Endothelial cell of umbilical vein (primary cell): ENCODE measurements at regions of chr10 and their contacts with region 1.

Region 1: DNA sequence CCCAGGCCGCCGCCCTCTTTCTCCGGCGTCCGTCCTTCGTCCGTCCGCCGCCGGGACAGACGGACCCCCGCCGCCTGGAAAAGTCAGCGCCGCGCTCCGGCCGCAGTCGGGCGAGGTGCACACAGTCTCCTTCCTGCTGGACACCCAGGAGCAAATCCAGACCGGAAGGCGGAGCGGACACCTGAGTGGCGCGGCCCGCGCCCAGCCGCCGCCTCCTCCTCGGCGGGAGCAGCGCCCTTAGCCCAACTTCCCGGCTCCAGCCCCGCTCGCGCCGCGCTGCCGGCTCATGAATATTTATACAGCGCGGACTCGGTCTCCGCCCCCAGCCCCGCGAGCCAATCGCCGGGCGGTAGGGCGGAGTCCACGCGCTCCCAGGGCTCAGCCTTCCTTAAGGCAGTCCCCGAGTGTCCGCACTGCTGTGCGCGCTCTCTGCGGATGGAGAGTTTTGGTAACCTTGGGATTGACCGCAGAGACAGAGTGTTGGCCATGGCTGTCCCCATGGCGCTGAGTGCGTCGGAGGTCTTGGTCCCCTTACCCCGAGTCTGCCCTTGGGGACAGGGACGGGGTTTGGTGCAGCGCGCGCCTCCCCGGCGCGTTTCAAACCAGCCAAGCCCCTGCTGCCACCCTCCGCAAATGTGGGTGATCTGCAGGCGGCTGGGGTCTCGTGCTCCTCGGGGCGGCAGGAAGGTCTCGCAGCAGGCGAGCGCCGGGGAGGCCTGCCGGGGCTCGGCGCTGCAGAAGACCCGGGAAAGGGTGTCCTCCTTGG is at the start of gene FZD8:
- DNase-seq: peak; percentile 95
- H3K4me3 ChIP-seq: peak within 1 kb of the TSS; percentile 58 to 74 (median 72)
- H3K27ac ChIP-seq: peak within 1 kb of the TSS; percentile 25
- H3K4me1 ChIP-seq: peaks cover 38% of the 10 kb centered on the region
- H3K27me3 ChIP-seq: peaks cover 2 to 25% of the 10 kb centered on the region in 2 experiments
- CTCF ChIP-seq: peak in 1 of 2 donors; percentile 35
- POLR2A ChIP-seq: peak; percentile 98
- total RNA-seq, gene FZD8: 9.1 and 11.1 TPM in 2 replicates

Region 2: DNA sequence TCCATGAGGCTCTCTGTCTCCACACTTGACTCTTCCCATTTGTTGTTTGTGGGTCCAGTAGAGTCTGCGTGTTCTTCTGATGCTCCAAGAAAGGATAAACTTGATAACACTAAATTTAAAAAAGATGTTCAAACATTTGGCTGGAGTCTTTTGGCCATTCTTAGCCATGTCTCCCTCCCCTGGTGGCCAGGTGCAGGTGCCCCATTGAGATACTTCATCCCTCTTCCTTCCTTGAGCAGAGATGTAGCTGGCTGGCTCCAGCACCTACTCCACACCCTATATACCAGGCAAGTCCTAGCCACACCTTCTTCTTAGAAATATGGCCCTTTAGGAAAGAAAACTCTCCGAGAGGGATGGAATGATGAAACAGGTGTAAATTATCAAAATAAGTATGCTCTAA is 140.3 kb before region 1 on chr10:
- CTCF ChIA-PET with region 1: no interaction called
- POLR2A ChIA-PET with region 1: no interaction called
- dilution Hi-C with region 1: no loop called
- intact Hi-C with region 1: no loop called
- DNase-seq: no peak
- H3K4me3 ChIP-seq: no peak overlapping the region
- H3K27ac ChIP-seq: no peak overlapping the region
- H3K4me1 ChIP-seq: no peaks in the 10 kb centered on the region
- H3K27me3 ChIP-seq: no peaks in the 10 kb centered on the region
- CTCF ChIP-seq: no peak
- POLR2A ChIP-seq: no peak

Region 3: DNA sequence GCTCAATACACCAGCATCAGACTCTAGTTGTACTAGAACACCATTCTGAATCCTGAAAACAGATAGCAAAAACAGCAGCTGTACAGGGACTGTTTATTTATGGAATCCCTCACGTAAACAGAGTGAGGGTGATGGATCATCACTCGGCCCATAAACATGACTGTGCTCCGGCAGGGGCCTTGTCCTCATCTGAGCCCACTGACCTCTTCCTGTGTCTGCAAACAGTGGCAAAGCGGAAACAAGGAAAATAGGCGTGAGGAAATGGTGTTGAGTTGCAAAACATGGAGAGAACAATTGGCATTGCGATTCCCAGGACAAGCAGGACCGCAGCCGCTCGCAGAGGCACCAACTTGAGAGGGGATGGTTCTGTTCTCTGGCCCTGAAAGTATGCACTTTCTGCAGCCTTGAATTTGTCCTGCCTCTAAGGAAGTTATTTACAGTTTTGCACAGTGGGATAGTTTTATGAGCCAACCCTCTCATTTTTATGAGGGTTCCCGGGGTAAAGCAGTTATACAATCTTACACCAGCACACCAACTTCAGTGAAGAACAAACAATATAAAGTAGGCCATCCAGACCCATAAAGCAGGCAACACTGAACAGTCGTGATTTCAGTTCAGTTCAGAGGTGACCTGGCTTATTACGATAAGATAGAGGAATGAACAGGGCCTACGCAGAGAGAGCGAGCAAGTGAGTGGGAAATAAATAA is 247.9 kb after region 1 on chr10:
- CTCF ChIA-PET with region 1: no interaction called
- POLR2A ChIA-PET with region 1: no interaction called
- dilution Hi-C with region 1: no loop called
- intact Hi-C with region 1: loop called (anchors 2 kb)
- DNase-seq: peak; percentile 85
- H3K4me3 ChIP-seq: no peak overlapping the region
- H3K27ac ChIP-seq: peak overlapping the region; percentile 58
- H3K4me1 ChIP-seq: peaks cover 19% of the 10 kb centered on the region
- H3K27me3 ChIP-seq: peaks cover 0 to 2% of the 10 kb centered on the region in 2 experiments
- CTCF ChIP-seq: no peak
- POLR2A ChIP-seq: no peak

Region 4: GRCh38 chr10:35993591-35994515 is 351.6 kb after region 1 on chr10:
- CTCF ChIA-PET with region 1: no interaction called
- POLR2A ChIA-PET with region 1: no interaction called
- dilution Hi-C with region 1: no loop called
- intact Hi-C with region 1: loop called (anchors 5 kb)
- DNase-seq: peak; percentile 39
- H3K4me3 ChIP-seq: no peak overlapping the region
- H3K27ac ChIP-seq: no peak overlapping the region
- H3K4me1 ChIP-seq: peaks cover 9% of the 10 kb centered on the region
- H3K27me3 ChIP-seq: no peaks in the 10 kb centered on the region
- CTCF ChIP-seq: no peak
- POLR2A ChIP-seq: no peak

Region 5: DNA sequence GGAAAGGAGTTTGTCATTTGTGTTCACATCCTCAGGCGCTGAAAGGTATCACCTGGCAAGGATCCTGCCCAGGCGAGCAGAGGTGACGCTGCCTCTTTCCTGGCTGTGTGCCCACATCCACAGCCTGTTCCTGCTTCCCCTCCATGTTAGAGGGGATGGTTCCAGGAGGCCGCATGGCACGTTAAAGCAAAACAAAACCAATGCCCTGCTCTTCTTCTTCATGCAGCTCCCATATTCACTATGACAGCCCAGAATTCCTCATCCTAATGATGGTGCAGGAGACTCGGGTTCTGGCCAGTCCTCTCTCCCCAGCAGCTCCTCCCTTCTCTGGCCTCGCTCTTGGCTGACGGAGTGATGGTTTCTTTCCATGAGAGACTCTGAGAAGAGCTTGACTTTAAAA is 804.7 kb after region 1 on chr10:
- CTCF ChIA-PET with region 1: no interaction called
- POLR2A ChIA-PET with region 1: no interaction called
- dilution Hi-C with region 1: no loop called
- intact Hi-C with region 1: loop called (anchors 5 kb)
- DNase-seq: peak; percentile 55
- H3K4me3 ChIP-seq: no peak overlapping the region
- H3K27ac ChIP-seq: no peak overlapping the region
- H3K4me1 ChIP-seq: peaks cover 12% of the 10 kb centered on the region
- H3K27me3 ChIP-seq: no peaks in the 10 kb centered on the region
- CTCF ChIP-seq: no peak
- POLR2A ChIP-seq: no peak

Region 6: DNA sequence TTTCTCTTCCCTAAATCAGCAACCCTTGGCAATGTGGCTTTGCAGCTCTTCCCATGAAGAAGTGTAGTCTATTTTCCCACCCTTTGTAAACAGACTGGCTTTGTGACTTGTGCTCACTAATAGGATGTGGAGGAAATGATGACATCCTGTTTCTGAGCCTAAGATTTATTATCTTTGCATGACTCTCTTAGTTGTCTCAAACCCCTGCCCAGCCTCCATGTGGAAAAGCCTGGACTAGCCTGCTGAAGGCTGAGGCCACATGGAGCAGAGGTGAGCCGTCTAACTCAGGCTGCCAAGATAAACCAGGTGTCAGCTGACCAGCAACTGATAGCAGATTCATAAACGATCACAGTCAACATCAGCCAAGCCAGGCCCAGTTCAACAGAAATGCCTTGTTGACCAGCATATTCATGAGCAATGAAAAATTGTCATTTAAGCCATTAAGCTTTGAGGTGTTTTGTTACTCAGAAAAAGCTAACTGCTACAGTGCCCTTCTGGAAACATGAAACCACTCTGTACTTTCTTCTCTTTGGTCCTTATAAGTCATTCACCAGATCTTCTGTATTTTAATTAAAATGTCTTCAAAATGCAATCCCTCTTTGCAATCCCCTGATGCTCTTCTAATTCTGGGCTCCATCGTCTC is 896.9 kb after region 1 on chr10:
- CTCF ChIA-PET with region 1: interaction called, 4 read pairs
- POLR2A ChIA-PET with region 1: no interaction called
- dilution Hi-C with region 1: no loop called
- intact Hi-C with region 1: loop called (anchors 1 kb)
- DNase-seq: peak; percentile 100
- H3K4me3 ChIP-seq: no peak overlapping the region
- H3K27ac ChIP-seq: peak overlapping the region; percentile 63
- H3K4me1 ChIP-seq: peaks cover 30% of the 10 kb centered on the region
- H3K27me3 ChIP-seq: no peaks in the 10 kb centered on the region
- CTCF ChIP-seq: peak; percentile 14 to 16
- POLR2A ChIP-seq: peak; percentile 57

Region 7: GRCh38 chr10:36725581-36726520 is 1083.6 kb after region 1 on chr10:
- CTCF ChIA-PET with region 1: interaction called, 16 read pairs
- POLR2A ChIA-PET with region 1: no interaction called
- dilution Hi-C with region 1: no loop called
- intact Hi-C with region 1: loop called (anchors 1 kb)
- DNase-seq: peak; percentile 66
- H3K4me3 ChIP-seq: no peak overlapping the region
- H3K27ac ChIP-seq: no peak overlapping the region
- H3K4me1 ChIP-seq: no peaks in the 10 kb centered on the region
- H3K27me3 ChIP-seq: peaks cover 0 to 3% of the 10 kb centered on the region in 2 experiments
- CTCF ChIP-seq: peak; percentile 7 to 37
- POLR2A ChIP-seq: no peak